Right ventricle myocardium inferior (tissue), 1 donor: ENCODE measurements at regions of chr22 and their contacts with region 1.

Region 1: DNA sequence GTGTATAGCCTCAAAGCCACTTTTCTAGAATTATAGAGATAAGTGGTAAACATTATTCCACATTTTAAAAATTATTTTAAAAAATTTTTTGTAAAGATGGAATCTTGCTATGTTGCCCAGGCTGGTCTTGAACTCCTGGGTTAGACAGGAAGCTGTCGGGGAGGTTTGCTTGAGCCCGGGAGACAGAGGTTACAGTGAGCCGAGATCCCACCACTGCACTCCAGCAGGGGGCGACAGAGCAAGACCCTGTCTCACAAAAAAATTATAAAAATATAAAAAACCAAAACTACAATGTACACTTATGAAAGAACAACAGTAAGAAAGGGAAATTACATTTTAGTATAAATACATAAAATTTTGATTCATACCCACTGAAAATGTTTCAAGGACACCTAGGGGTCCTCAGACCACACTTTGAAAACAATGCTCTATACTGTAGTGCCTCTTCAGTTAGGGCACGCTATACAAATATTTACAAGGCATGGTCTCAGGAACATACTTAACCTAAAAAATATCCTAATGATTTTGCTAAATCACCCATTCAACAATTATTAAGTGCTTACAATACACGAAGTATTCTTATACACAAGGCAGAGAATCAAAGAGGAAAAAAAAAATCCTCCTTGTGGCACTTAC is 111.2 kb downstream of the MRTFA start:
- DNase-seq: peak; percentile 69
- ATAC-seq: no peak

Region 2: GRCh38 chr22:40436505-40437451 is 88.6 kb before region 1 on chr22:
- intact Hi-C with region 1: loop called (anchors 5 kb)
- DNase-seq: no peak
- ATAC-seq: peak; percentile 73